SK-N-SH (cell line): ENCODE measurements at regions of chr1 and their contacts with region 1.

Region 1: GRCh38 chr1:62144238-62144831 is 50.3 kb upstream of the L1TD1 start:
- DNase-seq: peak; percentile 41
- H3K4me3 ChIP-seq: no peak overlapping the region
- H3K27ac ChIP-seq: no peak overlapping the region
- H3K4me1 ChIP-seq: no peaks in the 10 kb centered on the region; a peak in 1 of 4 replicates
- H3K27me3 ChIP-seq: no peaks in the 10 kb centered on the region
- CTCF ChIP-seq: peak; percentile 80
- EP300 ChIP-seq: no peak
- RAD21 ChIP-seq: peak; percentile 69

Region 2: DNA sequence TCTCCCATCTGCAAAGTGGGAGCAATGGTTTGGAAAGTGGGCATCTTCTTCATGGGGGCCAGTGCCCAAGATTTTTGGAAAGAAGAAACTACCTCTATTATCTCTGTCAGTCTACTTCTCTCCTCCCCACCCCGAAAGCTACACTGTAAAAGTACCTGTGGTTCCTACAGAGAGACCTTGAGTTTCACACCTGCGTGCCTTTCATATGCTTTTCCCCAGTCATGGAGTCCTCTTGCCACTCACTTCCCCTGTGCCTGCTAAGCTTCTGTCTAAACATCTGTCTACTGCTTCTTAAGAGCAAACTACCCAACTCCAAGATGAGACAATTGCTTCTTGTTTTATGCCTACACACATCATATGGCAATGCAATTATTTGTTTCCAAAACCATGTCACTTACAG is 140.6 kb before region 1 on chr1:
- CTCF ChIA-PET with region 1: no interaction called
- POLR2A ChIA-PET with region 1: no interaction called
- DNase-seq: no peak
- H3K4me3 ChIP-seq: no peak overlapping the region
- H3K27ac ChIP-seq: no peak overlapping the region
- H3K4me1 ChIP-seq: no peaks in the 10 kb centered on the region
- H3K27me3 ChIP-seq: no peaks in the 10 kb centered on the region
- CTCF ChIP-seq: no peak
- EP300 ChIP-seq: no peak
- RAD21 ChIP-seq: no peak

Region 3: DNA sequence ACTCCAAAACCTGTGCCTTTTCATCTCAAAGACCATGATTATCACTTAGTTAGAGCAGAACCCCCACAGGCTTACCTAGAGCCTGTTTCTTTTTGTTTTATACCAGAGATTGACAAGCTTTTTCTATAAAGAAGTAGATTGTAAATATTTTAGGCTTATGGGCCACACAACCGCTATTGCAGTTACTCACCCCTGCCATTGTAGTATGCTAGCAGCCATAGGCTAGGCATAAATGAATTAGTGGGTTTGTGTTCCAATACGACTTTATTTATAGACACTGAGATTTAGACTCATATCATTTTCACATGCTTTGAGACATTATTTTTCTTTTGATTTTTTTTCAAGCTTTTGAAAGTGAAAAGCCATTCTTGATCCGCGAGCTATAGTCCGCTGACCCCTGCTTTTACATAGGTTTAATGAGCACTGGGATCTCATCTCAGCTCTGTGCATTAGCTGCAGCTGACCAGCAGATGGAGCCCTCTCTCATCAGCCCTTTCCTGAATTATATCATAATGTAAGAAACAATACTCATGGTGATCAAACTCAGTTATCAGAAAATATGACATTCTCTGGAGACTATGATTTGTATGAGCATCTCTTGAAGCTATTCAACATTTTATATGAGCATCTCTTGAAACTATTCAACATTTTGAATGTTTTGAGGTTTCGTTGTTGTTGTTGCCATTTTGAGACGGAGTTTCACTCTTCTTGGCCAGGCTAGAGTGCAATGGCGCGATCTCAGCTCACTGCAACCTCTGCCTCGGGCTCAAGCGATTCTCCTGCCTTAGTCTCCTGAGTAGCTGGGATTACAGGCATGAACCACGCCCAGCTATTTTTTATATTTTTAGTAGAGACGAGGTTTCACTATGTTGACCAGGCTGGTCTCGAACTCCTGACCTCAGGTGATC is 61.6 kb before region 1 on chr1:
- CTCF ChIA-PET with region 1: interaction called, 36 read pairs
- POLR2A ChIA-PET with region 1: no interaction called
- DNase-seq: peak; percentile 66
- H3K4me3 ChIP-seq: peak overlapping the region in 1 of 2 experiments; percentile 16; a peak in 1 of 4 replicates
- H3K27ac ChIP-seq: no peak overlapping the region
- H3K4me1 ChIP-seq: no peaks in the 10 kb centered on the region
- H3K27me3 ChIP-seq: no peaks in the 10 kb centered on the region
- CTCF ChIP-seq: peak; percentile 98
- EP300 ChIP-seq: no peak
- RAD21 ChIP-seq: peak; percentile 74

Region 4: GRCh38 chr1:62131093-62131725 is 13.1 kb before region 1 on chr1:
- CTCF ChIA-PET with region 1: interaction called, 28 read pairs
- POLR2A ChIA-PET with region 1: no interaction called
- DNase-seq: peak; percentile 66
- H3K4me3 ChIP-seq: peak overlapping the region in 1 of 2 experiments; percentile 38; a peak in 1 of 4 replicates
- H3K27ac ChIP-seq: no peak overlapping the region
- H3K4me1 ChIP-seq: no peaks in the 10 kb centered on the region; a peak in 1 of 4 replicates
- H3K27me3 ChIP-seq: no peaks in the 10 kb centered on the region
- CTCF ChIP-seq: peak; percentile 73
- EP300 ChIP-seq: no peak
- RAD21 ChIP-seq: peak; percentile 75

Region 5: DNA sequence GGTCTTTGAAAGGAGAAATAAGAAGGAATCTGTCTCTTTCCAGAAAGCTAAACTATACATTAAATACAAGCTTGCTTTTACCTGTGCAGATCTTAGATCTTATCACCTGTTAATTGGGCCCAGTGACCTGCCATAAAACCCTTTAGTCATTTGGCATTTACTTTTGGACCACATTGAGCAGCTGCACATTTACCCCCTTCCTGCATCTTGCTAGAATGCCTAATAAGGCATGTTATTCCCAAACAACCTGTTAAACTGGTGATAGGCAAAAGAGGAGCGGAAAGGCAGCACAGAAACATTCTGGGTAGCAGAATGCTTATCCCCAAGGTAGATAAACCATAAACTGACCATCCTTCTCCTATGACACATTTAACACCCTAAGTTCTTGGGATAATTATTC is 10.4 kb after region 1 on chr1:
- CTCF ChIA-PET with region 1: interaction called, 25 read pairs
- POLR2A ChIA-PET with region 1: no interaction called
- DNase-seq: no peak
- H3K4me3 ChIP-seq: no peak overlapping the region
- H3K27ac ChIP-seq: no peak overlapping the region
- H3K4me1 ChIP-seq: no peaks in the 10 kb centered on the region
- H3K27me3 ChIP-seq: no peaks in the 10 kb centered on the region
- CTCF ChIP-seq: no peak
- EP300 ChIP-seq: no peak
- RAD21 ChIP-seq: no peak

Region 6: DNA sequence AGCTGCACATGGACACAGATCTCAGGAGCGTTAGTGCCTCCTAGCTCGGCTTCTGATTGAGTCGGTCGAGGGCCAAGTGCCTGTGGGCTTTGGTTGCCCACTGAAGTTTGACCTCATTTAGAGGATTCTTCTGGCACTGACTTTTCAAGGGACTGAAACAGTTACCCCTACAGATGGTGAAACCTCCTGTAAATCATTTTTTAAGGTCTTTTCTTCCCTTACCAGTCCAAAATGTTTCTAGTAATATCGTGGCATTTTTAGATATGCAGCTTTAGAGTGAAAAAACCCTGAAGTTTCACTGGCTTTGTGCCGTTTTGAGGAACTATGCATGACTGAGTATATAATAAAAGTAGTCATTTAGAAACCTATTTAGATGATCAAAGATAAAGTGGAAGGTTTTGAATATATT is 15.6 kb after region 1 on chr1:
- CTCF ChIA-PET with region 1: interaction called, 25 read pairs
- POLR2A ChIA-PET with region 1: interaction called, 3 read pairs
- DNase-seq: no peak
- H3K4me3 ChIP-seq: no peak overlapping the region
- H3K27ac ChIP-seq: no peak overlapping the region
- H3K4me1 ChIP-seq: no peaks in the 10 kb centered on the region
- H3K27me3 ChIP-seq: no peaks in the 10 kb centered on the region
- CTCF ChIP-seq: no peak
- EP300 ChIP-seq: no peak
- RAD21 ChIP-seq: no peak

Region 7: DNA sequence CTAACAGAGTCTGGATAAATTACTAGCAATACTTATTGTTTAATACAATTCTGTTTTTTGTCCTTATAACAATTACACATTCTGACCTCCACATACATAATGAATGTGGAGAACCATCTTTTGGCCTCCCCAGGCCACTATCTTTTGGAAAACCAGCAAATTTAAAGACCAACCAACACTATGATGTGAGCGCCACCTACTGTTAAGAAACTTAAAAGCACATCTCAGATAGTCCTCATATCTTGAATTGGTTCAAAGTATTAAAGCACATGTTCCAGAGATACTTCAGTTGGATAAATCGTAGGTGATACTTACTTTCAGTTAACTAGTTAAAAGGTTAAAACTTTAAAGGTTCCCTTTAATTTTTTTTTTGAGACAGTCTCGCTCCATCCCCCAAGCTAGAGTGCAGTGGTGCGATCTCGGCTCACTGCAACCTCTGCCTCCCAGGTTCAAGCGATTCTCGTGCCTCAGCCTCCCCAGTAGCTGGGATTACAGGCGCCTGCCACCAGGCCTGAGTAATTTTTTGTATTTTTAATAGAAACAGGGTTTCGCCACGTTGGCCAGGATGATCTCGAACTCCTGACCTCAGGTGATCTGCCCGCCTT is 263.2 kb after region 1 on chr1:
- CTCF ChIA-PET with region 1: interaction called, 12 read pairs
- POLR2A ChIA-PET with region 1: no interaction called
- DNase-seq: peak; percentile 65
- H3K4me3 ChIP-seq: no peak overlapping the region; a peak in 1 of 4 replicates
- H3K27ac ChIP-seq: no peak overlapping the region
- H3K4me1 ChIP-seq: no peaks in the 10 kb centered on the region
- H3K27me3 ChIP-seq: no peaks in the 10 kb centered on the region; the same call in 1 of the 2 replicates
- CTCF ChIP-seq: peak; percentile 89
- EP300 ChIP-seq: no peak
- RAD21 ChIP-seq: peak; percentile 95